RWPE1 (cell line): ENCODE measurements at regions of chr22 and their contacts with region 1.

Region 1: DNA sequence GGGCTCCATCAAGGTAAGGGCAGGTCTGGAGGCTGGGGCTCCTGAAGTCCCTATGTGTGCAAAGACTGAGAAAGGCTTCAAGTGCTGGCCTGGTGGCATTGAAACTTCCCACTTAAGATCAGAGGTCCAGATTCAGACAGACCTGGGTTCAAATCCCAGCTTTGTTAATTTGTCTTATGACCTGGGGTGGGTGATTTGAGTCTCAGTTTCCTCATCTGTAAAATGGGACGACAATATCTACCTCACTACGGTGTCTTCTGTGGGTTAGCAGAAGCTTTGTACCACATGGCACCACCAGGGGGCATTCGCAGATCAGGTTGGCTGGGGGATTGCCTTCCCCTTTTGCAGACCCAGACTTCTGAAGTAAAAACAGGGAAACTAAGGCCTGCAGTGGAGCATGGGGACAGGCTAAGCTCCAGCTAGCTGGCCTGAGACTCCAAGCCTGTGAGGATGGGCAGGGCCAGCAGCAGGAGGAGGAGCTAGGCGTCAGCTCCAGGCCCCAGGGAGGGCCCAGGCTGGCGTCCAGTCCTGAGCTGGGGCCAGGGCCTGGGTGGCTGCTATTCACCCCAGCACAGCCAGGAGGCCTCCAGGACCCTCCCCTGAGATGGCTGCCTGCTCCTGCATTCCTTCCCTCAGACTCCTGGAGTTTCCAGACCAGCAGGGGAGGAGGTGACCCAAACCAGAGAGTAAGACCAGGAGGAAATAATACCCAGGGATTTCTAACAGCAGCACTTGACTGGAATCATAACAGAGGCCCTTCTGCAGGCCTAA is 1.5 kb downstream of the CASTOR1 start:
- DNase-seq: peak; percentile 65
- H3K27ac ChIP-seq: peak overlapping the region; percentile 95
- CTCF ChIP-seq: peak; percentile 79

Region 2: DNA sequence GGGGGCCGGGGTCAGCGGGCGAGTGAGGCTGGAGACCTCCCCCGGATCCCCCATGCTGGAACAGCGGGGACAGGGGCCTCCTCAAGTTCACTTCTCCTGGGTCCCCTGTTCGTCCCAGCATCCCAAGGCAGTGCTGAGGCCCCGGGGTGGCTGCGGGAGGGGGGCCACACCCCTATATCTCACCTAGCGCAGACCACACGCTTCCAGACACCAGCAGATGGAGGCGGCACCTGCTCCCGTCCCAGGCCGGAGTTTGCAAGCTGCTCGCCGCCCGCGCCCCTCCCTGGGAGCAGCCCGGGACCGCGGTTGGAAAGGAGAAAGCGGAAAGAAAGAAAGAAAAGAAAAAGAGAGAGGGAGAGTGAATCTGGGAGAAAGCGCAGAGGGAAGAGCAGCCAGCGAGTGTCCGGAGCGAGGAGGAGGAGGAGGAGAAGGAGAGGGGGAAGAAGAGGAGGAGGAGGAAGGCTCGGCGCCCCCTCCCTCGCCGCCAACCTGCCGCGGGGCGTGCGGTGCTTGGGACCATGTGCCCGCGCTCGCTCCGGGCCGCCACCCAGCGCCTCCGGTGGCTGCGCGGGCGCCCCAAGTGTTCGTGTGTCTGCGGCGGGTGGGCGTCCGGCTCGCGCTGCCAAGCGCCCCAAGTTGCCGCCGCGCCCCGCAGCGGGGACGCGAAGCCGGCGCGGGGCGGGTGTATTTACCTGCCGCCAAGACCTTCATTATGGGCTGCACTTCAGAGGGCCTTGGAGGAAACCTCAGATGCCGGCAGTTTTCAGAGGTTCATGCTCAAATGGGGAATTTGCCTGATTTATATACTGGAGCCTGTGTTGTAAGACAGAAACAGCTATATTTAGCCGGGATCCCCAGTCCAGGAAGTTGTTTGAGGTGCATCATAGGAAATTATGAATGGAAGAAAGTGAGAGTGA is 41.6 kb before region 1 on chr22 and contains the start of gene LIF:
- CTCF ChIA-PET with region 1: no interaction called
- POLR2A ChIA-PET with region 1: no interaction called
- DNase-seq: peak; percentile 53
- H3K27ac ChIP-seq: peak within 1 kb of the TSS; percentile 41
- CTCF ChIP-seq: peak; percentile 52

Region 3: DNA sequence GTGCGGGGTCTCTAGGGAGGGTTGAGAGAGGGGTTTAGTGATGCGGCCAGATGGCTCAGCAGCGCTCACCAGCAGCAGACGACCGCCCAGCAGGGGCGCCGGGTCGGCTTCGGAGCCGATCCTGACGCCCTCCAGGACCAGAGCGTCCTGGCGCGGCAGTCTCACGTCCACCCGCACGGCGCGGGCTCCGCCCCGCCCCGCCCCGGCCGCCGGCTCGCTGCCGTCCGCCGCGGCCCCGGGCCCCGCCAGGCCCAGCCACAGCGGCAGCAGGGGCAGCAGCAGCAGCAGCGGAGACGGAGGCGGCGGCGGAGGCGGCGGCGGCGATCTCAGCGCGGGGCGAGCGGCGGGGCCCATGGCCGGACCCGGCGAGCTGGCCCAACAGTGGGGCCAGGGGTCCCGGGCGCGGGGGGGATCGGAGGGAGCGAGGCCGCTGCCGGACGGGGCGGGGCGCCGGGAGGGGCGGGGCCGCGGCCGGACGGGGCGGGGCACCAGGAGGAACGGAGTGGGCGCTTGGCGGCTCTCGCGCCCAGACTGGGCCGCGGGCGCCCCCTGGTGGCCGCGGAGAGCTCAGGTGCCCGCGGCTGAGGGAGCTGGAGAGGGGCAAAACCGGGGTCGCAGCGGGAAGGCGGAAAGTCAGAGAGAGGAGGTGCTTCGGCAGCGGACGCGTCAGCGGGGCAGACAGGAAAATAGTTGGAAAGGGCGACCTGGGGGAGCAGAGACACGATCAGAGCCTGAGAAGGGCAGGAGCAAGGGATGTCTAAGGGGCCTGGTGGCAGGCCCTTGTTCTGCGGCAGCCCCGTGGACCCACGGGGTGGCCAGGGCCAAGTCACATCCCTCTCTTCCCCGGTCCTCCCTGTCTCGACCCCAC is 99.4 kb after region 1 on chr22 and contains the start of gene RNF215:
- CTCF ChIA-PET with region 1: interaction called, 17 read pairs
- POLR2A ChIA-PET with region 1: no interaction called
- DNase-seq: peak; percentile 76
- H3K27ac ChIP-seq: peak within 1 kb of the TSS; percentile 78
- CTCF ChIP-seq: peak; percentile 91

Region 4: GRCh38 chr22:30474683-30475424 is 187.0 kb after region 1 on chr22:
- CTCF ChIA-PET with region 1: no interaction called
- POLR2A ChIA-PET with region 1: no interaction called
- DNase-seq: no peak
- H3K27ac ChIP-seq: no peak overlapping the region
- CTCF ChIP-seq: no peak

Region 5: DNA sequence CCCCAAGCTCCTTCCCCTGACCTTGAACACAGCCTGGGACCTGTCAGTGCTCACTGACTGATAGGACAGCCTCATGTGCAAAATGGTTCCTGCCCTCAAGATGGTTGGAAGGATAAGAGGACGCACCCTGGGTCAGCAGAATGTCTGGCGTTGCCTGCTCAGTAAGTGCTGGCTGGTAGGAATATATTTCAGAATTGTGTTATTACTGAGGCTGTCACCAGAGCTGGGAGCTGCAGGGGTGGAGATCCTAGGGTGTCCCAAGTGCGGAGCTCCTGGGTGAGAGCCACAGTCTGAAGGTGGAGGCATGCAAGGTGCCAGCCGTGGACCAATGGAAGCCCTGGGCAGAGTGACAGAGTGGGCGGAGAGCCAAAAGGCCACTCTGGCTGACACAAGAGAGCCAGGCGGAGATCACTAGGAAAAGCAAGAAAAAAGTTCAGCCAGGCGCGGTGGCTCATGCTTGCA is 218.7 kb after region 1 on chr22:
- CTCF ChIA-PET with region 1: no interaction called
- POLR2A ChIA-PET with region 1: no interaction called
- DNase-seq: no peak
- H3K27ac ChIP-seq: no peak overlapping the region
- CTCF ChIP-seq: no peak

Region 6: GRCh38 chr22:30610299-30610698 is 322.5 kb after region 1 on chr22:
- CTCF ChIA-PET with region 1: no interaction called
- POLR2A ChIA-PET with region 1: no interaction called
- DNase-seq: no peak
- H3K27ac ChIP-seq: no peak overlapping the region
- CTCF ChIP-seq: no peak